Natural killer cell (primary cell): ENCODE measurements at regions of chr14 and their contacts with region 1.

Region 1: GRCh38 chr14:88013750-88014349 is 8.9 kb downstream of the GPR65 start:
- DNase-seq: peak; percentile 55 to 70
- ATAC-seq: peak; percentile 86 to 87 (median 87)
- H3K4me3 ChIP-seq: no peak overlapping the region
- H3K4me3 Mint-ChIP-seq: peak overlapping the region; percentile 75
- H3K27ac ChIP-seq: peak overlapping the region; percentile 56
- H3K27ac Mint-ChIP-seq: peak overlapping the region; percentile 96 to 98
- H3K4me1 ChIP-seq: peaks cover 40% of the 10 kb centered on the region
- H3K4me1 Mint-ChIP-seq: peaks cover 81 to 84% of the 10 kb centered on the region in 2 donors
- H3K27me3 ChIP-seq: no peaks in the 10 kb centered on the region
- H3K27me3 Mint-ChIP-seq: no peaks in the 10 kb centered on the region
- CTCF ChIP-seq: peak; percentile 90

Region 2: GRCh38 chr14:87767567-87767901 is 246.3 kb before region 1 on chr14:
- intact Hi-C with region 1: no loop called
- DNase-seq: no peak
- ATAC-seq: no peak
- H3K4me3 ChIP-seq: no peak overlapping the region
- H3K4me3 Mint-ChIP-seq: no peak overlapping the region
- H3K27ac ChIP-seq: no peak overlapping the region
- H3K27ac Mint-ChIP-seq: no peak overlapping the region
- H3K4me1 ChIP-seq: no peaks in the 10 kb centered on the region
- H3K4me1 Mint-ChIP-seq: no peaks in the 10 kb centered on the region
- H3K27me3 ChIP-seq: no peaks in the 10 kb centered on the region
- H3K27me3 Mint-ChIP-seq: peaks cover 3 to 12% of the 10 kb centered on the region in 2 donors
- CTCF ChIP-seq: no peak

Region 3: GRCh38 chr14:87847216-87847755 is 166.6 kb before region 1 on chr14:
- intact Hi-C with region 1: no loop called
- DNase-seq: no peak
- ATAC-seq: peak in 1 of 3 donors; percentile 21
- H3K4me3 ChIP-seq: no peak overlapping the region
- H3K4me3 Mint-ChIP-seq: no peak overlapping the region
- H3K27ac ChIP-seq: no peak overlapping the region
- H3K27ac Mint-ChIP-seq: no peak overlapping the region
- H3K4me1 ChIP-seq: no peaks in the 10 kb centered on the region
- H3K4me1 Mint-ChIP-seq: no peaks in the 10 kb centered on the region
- H3K27me3 ChIP-seq: no peaks in the 10 kb centered on the region
- H3K27me3 Mint-ChIP-seq: peaks cover 12 to 13% of the 10 kb centered on the region in 2 donors
- CTCF ChIP-seq: no peak

Region 4: DNA sequence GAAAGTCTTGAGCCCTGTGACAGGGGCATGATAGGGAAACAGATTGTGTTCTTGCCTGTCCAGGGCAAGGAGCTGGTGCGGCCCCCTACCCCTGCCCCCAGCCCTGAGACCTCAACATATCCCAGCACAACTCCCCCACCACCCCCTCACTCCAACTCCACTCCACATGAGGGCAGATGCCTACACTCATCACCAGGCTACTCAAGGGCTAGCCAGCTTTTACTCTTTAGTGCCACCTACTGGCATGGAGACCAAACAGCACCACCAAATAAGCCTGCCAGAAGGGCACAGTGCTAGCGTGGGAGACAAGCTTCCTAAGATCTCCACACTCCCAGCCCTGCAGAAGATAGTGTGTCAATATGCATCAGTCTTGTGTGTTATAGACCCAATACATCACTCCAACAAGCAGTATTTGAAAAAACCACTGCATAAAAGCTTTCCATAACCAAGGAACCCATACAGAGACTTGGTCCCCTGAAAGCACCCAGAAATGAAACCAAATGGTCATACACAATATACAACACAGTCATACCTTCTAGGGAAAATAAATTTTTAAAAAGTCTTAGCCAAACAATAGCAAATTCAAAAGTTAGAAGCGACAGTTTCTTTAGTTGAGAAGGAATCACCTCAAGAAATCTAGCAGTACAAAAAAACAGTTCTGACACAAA is 154.8 kb after region 1 on chr14:
- intact Hi-C with region 1: loop called (anchors 1 kb)
- DNase-seq: peak; percentile 46 to 83
- ATAC-seq: peak; percentile 84 to 93 (median 85)
- H3K4me3 ChIP-seq: no peak overlapping the region
- H3K4me3 Mint-ChIP-seq: peak overlapping the region; percentile 14
- H3K27ac ChIP-seq: no peak overlapping the region
- H3K27ac Mint-ChIP-seq: peak overlapping the region in 1 of 2 donors; percentile 25
- H3K4me1 ChIP-seq: peaks cover 26% of the 10 kb centered on the region
- H3K4me1 Mint-ChIP-seq: peaks cover 29 to 34% of the 10 kb centered on the region in 2 donors
- H3K27me3 ChIP-seq: peaks cover 7% of the 10 kb centered on the region
- H3K27me3 Mint-ChIP-seq: peaks cover 13 to 38% of the 10 kb centered on the region in 2 donors
- CTCF ChIP-seq: peak; percentile 72

Region 5: DNA sequence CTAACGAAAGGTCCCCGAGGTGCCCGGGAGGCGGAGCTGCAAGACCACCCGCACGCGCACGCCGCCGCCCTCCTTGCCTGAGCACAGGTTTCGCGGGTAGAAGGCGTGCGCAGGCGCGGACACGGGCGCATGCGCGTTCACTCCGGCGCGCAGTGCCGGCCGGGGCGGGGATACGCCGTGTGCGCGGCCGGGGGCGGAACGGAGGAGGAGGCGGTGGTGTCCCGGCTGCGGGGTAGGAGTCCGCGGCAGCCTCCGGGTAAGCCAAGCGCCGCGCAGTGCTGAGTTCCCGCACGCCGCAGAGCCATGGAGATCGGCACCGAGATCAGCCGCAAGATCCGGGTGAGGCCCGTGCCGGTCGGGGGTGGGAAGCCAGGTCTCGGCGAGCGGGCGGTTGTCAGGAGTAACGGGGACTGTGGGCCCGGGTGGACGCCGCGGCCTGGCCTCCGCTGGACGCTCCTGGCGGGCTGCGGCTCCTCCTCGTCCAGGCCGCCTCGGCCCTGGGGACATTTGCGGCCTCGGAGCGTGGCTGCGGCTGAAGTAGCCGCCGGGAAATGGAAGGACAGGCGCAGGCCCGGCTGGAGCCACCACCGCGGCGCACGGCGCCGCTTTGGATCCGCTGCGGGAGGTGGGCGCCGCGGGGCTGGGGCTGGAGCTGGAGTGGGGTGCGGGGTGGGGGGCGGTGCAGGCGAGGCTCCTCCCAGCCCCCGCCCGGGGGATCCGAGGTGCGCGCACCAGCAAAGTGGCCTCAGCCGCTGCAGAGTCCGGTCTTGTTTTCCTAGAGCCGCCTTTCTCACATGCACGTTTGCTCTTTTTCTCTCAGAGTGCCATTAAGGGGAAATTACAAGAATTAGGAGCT is 549.2 kb after region 1 on chr14 and contains the start of gene ZC3H14:
- intact Hi-C with region 1: loop called (anchors 5 kb)
- DNase-seq: peak; percentile 84 to 95
- ATAC-seq: peak; percentile 95 to 97 (median 96)
- H3K4me3 ChIP-seq: peak within 1 kb of the TSS; percentile 86
- H3K4me3 Mint-ChIP-seq: peak within 1 kb of the TSS; percentile 91
- H3K27ac ChIP-seq: peak within 1 kb of the TSS; percentile 51
- H3K27ac Mint-ChIP-seq: peak within 1 kb of the TSS; percentile 74 to 91
- H3K4me1 ChIP-seq: peaks cover 12% of the 10 kb centered on the region
- H3K4me1 Mint-ChIP-seq: peaks cover 22 to 23% of the 10 kb centered on the region in 2 donors
- H3K27me3 ChIP-seq: no peaks in the 10 kb centered on the region
- H3K27me3 Mint-ChIP-seq: peaks cover 12 to 13% of the 10 kb centered on the region in 2 donors
- CTCF ChIP-seq: no peak
- total RNA-seq, gene ZC3H14: 44.1 to 54.5 (median 53.4) TPM